ENCODE measurements at regions of chr4 and their contacts with region 1.

Region 1: GRCh38 chr4:145818011-145818410 is 120.6 kb downstream of the ZNF827 start:
- DNase-seq: no peak

Region 2: DNA sequence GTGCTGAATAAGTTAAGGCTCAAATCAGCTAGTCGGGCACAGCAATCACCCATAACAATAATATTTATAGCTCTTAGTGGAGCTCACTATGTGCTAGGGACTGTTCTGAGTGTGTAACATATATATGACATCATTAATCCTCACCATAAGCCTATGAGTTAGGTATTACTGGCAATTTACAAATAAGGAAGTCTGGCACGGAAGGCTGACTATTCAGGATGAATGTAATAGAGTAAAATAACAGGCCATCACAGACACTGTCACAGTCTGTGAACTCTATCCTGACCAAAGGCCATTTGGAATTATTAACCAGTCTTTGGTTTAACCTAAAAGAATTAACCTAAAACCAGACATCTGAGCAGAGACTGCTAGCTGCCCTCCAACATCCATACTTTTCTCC is 18.8 kb before region 1 on chr4:
- intact Hi-C with region 1: loop called in 1 of 2 experiments (anchors 1 kb)
- DNase-seq: no peak